Activated naive CD8-positive, alpha-beta T cell treated with anti-CD3 and anti-CD28 coated beads, Interleukin-2, amount 10 ng/mL, durations not matched to agents 7 days and 5 days (primary cell): ENCODE measurements at regions of chr12 and their contacts with region 1.

Region 1: DNA sequence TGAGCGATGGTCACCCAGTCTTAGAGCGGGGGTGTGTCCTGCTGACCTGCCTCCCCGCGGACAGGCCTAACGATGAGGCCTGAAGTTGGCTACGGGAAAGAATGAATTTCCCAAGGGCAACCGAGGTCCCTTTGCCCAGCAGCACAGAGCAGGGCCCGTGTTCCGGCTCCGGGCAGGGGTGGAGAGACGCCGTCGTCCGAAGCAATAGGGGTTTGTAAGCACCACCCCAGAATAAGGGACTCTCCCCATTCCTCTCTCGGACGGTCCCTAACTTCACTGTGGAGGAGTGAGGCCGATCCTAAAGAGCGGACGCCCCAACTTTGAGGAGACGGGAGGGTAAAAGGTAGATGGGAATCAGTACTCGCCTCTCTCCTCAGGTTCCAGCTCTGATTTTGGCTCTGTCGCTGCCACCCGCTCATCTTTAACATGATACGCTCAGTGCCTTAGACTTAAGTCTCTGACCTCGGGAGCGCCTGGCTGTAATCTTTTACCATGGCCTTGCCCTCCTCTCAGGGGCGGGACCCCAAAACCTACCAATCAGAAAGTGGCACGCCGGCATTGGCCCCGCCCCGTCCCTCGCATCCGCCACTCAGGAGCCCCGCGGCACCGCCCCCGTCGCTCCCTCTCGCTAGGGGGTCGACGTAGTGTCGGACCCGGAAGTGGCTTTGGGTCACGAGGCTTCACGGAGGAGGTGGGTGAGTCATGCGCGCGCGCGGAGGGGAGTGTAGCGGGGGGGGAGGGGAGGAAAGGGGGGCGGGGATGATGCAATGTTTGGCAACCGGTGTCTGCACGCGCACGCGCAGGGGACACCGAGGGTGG is at the start of gene DDIT3:
- DNase-seq: peak; percentile 99
- ATAC-seq: peak; percentile 65
- H3K4me3 Mint-ChIP-seq: peak within 1 kb of the TSS; percentile 96
- H3K27ac Mint-ChIP-seq: peak within 1 kb of the TSS; percentile 100
- H3K4me1 Mint-ChIP-seq: peaks cover 54% of the 10 kb centered on the region
- H3K27me3 Mint-ChIP-seq: no peaks in the 10 kb centered on the region
- total RNA-seq, gene DDIT3: 34.4 to 37.2 TPM

Region 2: GRCh38 chr12:57404966-57405640 is 115.2 kb before region 1 on chr12:
- POLR2A ChIA-PET with region 1: no interaction called
- DNase-seq: no peak
- ATAC-seq: no peak
- H3K4me3 Mint-ChIP-seq: no peak overlapping the region
- H3K27ac Mint-ChIP-seq: no peak overlapping the region
- H3K4me1 Mint-ChIP-seq: peaks cover 2% of the 10 kb centered on the region
- H3K27me3 Mint-ChIP-seq: no peaks in the 10 kb centered on the region

Region 3: GRCh38 chr12:57462251-57462911 is 57.9 kb before region 1 on chr12:
- POLR2A ChIA-PET with region 1: interaction called, 11 read pairs
- DNase-seq: peak; percentile 87
- ATAC-seq: peak; percentile 74
- H3K4me3 Mint-ChIP-seq: peak overlapping the region; percentile 92
- H3K27ac Mint-ChIP-seq: peak overlapping the region; percentile 27
- H3K4me1 Mint-ChIP-seq: peaks cover 35% of the 10 kb centered on the region
- H3K27me3 Mint-ChIP-seq: peaks cover 11% of the 10 kb centered on the region

Region 4: DNA sequence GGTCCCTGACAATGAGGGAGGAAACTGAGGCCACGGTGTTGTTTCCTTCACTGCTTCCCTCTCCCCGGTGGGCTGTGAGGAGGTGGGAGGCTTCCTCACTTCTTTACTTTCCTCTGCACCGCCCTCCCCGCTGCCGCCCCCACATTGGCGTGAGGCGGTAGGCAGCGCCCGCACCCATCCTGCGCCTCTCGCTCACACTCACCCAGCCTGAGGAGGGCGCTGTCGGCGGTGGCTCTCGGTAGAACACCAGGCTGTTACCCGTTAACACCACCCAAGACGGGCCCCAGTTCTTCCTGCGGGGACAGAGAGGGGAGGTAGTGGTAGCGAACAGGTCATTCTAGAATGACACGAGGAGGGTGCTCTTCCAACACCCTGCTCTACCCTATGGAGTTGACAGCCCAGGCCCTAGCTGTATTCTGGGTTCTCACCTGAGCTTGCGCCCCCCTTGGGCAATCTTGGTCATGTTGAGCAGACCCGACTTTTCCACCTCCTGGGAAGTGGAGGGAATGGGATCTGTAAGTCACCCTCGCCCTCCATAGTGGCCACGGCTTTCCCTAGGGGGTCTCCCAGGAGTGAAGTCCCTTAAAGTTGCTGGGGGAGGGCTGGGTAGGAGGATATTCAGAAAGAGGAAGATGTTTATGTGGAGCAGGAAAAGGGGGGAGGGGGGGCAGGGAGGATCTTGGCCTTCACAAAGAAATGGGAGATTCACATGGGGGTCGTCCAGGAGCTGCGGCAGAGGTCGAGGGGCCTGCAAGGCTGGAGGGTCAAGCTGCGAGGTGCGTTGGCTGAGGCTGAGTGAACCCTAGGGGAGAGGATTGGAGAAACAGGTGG is 43.9 kb before region 1 on chr12:
- POLR2A ChIA-PET with region 1: interaction called, 94 read pairs
- DNase-seq: peak; percentile 85
- ATAC-seq: peak; percentile 39
- H3K4me3 Mint-ChIP-seq: peak overlapping the region; percentile 96
- H3K27ac Mint-ChIP-seq: peak overlapping the region; percentile 99
- H3K4me1 Mint-ChIP-seq: peaks cover 54% of the 10 kb centered on the region
- H3K27me3 Mint-ChIP-seq: no peaks in the 10 kb centered on the region

Region 5: DNA sequence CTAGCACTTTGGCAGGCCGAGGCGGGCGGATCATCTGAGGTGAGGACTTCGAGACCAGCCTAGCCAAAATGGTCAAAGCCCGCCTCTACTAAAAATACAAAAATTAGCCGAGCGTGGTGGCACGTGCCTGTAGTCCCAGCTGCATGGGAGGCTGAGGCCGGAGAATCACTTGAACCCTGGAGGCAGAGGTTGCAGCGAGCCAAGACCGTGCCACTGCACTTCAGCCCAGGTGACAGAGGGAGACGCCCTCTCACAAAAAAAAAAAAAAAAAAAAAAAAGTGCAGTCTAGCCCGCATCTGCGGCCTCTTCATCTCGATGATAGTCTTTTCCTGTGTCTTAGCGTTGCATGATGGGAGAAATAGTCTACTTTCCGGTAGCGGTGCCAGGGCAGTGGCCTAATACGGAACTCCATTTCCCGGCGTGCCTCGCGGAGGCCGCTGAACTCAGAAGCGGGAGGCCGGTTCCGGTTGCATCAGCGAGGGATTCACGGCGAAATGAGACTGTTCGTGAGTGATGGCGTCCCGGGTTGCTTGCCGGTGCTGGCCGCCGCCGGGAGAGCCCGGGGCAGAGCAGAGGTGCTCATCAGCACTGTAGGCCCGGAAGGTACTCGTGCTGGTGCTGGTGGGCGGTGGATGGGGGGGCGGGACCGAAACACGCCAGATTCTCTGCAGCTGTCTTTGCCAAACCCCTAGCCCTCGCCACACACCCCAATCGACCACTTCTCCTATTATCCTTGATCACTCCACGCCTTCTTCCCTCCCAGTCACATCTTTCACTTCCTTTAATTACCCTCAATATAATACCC is 32.5 kb before region 1 on chr12 and contains the start of gene MARS1:
- POLR2A ChIA-PET with region 1: interaction called, 24 read pairs
- DNase-seq: peak; percentile 87
- ATAC-seq: peak; percentile 96
- H3K4me3 Mint-ChIP-seq: peak within 1 kb of the TSS; percentile 94
- H3K27ac Mint-ChIP-seq: peak within 1 kb of the TSS; percentile 95
- H3K4me1 Mint-ChIP-seq: peaks cover 31% of the 10 kb centered on the region
- H3K27me3 Mint-ChIP-seq: no peaks in the 10 kb centered on the region
- total RNA-seq, gene MARS1: 293 to 306 TPM

Region 6: GRCh38 chr12:57546438-57547383 is 26.4 kb after region 1 on chr12 and contains the start of gene DCTN2:
- POLR2A ChIA-PET with region 1: interaction called, 17 read pairs
- DNase-seq: peak; percentile 85
- ATAC-seq: peak; percentile 96
- H3K4me3 Mint-ChIP-seq: peak within 1 kb of the TSS; percentile 99
- H3K27ac Mint-ChIP-seq: peak within 1 kb of the TSS; percentile 94
- H3K4me1 Mint-ChIP-seq: peaks cover 44% of the 10 kb centered on the region
- H3K27me3 Mint-ChIP-seq: peaks cover 24% of the 10 kb centered on the region
- total RNA-seq, gene DCTN2: 81.0 to 84.4 TPM

Region 7: GRCh38 chr12:57611108-57611809 is 91.0 kb after region 1 on chr12 and contains the start of gene ARHGEF25:
- POLR2A ChIA-PET with region 1: no interaction called
- DNase-seq: peak; percentile 62
- ATAC-seq: peak; percentile 71
- H3K4me3 Mint-ChIP-seq: peak within 1 kb of the TSS; percentile 74
- H3K27ac Mint-ChIP-seq: peak within 1 kb of the TSS; percentile 75
- H3K4me1 Mint-ChIP-seq: peaks cover 10% of the 10 kb centered on the region
- H3K27me3 Mint-ChIP-seq: peaks cover 43% of the 10 kb centered on the region
- total RNA-seq, gene ARHGEF25: 1.3 to 1.4 TPM

Region 8: DNA sequence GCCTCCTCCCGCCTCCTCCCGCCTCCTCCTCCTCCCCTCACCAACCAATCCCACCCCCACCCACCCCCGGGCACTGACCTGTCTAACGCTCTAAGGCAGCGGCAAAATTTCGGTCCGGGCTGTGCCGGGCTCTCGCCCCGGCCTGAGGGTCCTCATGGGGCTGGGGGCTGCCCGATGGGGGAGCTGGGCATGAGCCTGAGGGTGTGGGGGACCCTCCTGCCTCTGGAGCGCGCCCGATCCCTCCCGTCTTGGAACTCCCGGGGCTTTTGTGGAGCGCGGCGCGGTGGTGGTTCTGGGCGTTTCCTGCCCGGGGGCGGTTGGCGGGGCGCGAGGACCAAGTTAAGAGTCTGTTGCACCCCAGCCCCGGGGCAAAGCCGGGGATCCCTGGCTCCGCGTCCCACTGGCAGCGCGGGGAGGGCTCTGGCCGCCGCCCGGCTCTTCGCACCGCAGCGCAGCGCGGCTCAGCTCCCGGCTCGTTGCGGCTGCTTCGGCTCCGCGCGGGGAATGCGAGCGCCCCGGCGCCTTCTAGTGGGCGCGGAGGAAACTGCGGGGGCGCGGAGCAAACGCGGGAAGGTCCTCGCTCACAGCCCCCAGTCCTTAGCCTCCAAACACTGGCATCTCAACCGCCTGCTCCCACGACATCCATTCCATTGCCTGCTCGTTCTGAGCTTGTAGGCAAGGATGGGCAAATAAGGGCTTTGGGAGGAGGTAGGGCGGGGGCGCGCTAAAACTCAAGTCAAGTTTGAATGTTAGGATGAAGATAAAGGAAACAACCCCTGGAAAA is 112.6 kb after region 1 on chr12 and contains the start of gene B4GALNT1:
- POLR2A ChIA-PET with region 1: no interaction called
- DNase-seq: peak; percentile 84
- ATAC-seq: peak; percentile 79
- H3K4me3 Mint-ChIP-seq: peak within 1 kb of the TSS; percentile 78
- H3K27ac Mint-ChIP-seq: no peak within 1 kb of the TSS
- H3K4me1 Mint-ChIP-seq: peaks cover 8% of the 10 kb centered on the region
- H3K27me3 Mint-ChIP-seq: peaks cover 61% of the 10 kb centered on the region
- total RNA-seq, gene B4GALNT1: 0.65 to 0.80 TPM

Region 9: DNA sequence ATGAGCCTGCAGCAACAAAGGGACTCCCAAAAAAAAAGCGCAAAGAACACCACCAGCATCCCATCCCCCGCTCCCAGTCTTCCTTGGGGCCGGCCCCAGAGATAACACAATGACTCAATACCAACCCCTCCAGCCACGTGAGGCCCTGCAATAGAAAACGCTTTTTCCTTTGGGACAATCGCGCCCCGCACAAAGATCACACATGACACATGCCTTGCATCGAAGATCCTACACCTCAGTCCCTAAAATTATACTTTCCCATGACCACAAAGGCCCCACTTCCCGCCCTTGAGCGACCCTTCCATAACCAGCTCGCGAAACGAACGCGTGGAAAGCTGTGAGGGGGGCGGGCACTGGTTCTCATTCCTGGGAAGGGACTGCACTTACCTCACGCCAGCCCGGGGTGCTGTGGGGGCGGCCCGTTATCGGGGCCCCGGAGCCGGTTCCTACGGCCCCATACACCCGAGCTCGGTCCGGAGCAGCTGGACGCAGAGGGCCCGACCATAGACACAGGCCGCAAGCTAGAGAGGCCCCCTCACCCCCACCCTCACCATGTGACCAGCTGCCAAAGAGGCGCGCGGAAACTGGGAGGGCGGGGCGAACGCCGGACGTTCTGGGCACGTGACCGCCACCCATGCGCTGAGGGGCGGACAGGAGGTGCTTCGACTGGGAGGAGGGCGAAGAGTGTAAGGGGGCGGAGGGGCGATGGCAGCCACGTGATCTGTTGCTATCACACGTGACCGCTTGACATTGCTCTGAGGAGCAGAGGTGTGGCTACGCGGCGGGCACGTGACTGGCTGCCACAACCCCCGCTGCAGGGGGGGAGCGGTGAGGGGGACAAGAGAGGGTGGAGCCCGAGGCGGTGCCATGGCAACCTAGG is 231.8 kb after region 1 on chr12 and contains the start of gene CDK4:
- POLR2A ChIA-PET with region 1: no interaction called
- DNase-seq: peak; percentile 99
- ATAC-seq: peak; percentile 77
- H3K4me3 Mint-ChIP-seq: peak within 1 kb of the TSS; percentile 93
- H3K27ac Mint-ChIP-seq: peak within 1 kb of the TSS; percentile 83
- H3K4me1 Mint-ChIP-seq: peaks cover 40% of the 10 kb centered on the region
- H3K27me3 Mint-ChIP-seq: no peaks in the 10 kb centered on the region
- total RNA-seq, gene CDK4: 98.4 to 100 TPM